ENCODE measurements at regions of chr12 and their contacts with region 1.

Region 1: DNA sequence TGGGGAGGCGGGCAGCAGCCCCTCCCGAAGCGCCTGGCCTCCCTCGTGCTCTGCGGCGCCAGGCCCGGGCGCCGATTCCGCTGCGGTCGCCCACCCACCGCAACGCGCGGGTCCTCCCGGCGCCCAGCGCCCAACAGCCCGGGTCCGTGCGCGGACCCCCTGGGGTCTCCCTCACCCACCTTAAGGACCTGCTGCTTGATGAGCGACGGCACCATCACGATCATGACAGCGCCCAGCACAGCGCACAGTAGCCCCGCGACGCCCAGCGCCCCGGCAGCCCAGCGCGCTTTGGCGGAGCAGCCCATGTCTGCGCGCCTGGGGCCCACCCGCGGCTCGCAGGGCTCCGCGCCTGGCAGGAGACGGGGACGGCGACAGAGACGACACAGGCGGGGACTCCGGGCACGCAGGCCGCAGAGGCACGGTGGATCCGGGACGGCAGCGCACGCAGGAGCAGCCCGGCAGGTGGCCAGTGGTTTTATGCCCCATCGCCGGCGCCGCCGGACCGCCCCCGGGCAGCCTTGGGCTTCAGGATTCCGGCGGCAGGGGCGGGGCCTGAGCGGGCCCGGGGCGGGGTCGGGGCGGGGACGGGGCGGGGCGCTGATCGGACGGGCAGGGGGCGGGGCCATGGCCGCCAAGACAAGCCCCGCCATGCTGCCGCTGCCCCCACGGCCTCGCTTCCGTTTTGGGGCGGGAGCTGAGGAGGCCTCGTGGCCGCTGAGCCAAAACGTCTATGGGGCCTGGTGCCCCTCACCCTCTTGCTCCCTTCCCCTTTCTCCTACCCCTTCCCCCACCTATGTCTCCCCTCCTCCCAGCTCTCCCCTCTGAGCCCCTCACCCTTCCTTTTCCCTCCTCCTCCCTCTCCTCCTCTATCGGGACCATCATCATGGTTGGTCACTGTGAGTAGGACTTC is at the start of gene SCARB1:
- DNase-seq: peak; percentile 83
- H3K4me3 Mint-ChIP-seq: peak within 1 kb of the TSS; percentile 76
- H3K27ac Mint-ChIP-seq: peak within 1 kb of the TSS; percentile 86
- H3K4me1 Mint-ChIP-seq: peaks cover 32% of the 10 kb centered on the region
- H3K27me3 Mint-ChIP-seq: no peaks in the 10 kb centered on the region
- CTCF ChIP-seq: no peak
- total RNA-seq, gene SCARB1: 48.2 and 71.0 TPM in 2 replicates

Region 2: DNA sequence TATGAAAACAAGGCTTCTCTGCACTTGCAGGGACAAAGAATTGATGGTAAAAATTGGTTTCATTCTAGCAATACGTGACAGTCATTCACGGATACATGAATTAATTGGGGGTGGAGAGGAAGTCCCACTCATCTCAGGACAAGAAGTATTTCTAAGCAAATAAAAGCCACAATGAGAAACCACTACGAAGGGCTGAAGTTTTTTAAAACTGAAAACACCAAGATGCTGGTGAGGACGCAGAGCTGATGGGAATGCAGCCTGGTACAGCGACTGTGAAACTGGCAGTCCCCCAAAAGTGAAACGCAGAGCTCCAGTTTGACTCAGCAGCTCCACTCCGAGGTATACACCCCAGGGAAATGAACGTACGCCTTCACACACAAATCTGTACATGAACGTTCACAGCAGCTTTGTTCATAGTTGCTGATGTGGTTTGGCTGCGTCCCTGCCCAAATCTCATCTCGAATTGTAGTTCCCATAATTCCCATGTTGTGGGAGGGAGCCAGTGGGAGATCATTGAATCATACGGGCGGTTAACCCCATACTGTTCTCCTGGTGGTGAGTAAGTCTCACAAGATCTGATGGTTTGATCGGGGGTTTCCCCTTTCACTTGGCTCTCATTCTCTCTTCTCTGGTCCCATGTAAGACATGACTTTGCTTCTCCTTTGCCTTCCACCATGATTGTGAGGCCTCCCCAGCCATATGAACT is 89.1 kb before region 1 on chr12:
- CTCF ChIA-PET with region 1: no interaction called
- POLR2A ChIA-PET with region 1: no interaction called
- intact Hi-C with region 1: loop called (anchors 2 kb)
- DNase-seq: peak; percentile 92
- H3K4me3 Mint-ChIP-seq: peak overlapping the region; percentile 32
- H3K27ac Mint-ChIP-seq: peak overlapping the region; percentile 40
- H3K4me1 Mint-ChIP-seq: peaks cover 39% of the 10 kb centered on the region
- H3K27me3 Mint-ChIP-seq: no peaks in the 10 kb centered on the region
- CTCF ChIP-seq: peak; percentile 12

Region 3: DNA sequence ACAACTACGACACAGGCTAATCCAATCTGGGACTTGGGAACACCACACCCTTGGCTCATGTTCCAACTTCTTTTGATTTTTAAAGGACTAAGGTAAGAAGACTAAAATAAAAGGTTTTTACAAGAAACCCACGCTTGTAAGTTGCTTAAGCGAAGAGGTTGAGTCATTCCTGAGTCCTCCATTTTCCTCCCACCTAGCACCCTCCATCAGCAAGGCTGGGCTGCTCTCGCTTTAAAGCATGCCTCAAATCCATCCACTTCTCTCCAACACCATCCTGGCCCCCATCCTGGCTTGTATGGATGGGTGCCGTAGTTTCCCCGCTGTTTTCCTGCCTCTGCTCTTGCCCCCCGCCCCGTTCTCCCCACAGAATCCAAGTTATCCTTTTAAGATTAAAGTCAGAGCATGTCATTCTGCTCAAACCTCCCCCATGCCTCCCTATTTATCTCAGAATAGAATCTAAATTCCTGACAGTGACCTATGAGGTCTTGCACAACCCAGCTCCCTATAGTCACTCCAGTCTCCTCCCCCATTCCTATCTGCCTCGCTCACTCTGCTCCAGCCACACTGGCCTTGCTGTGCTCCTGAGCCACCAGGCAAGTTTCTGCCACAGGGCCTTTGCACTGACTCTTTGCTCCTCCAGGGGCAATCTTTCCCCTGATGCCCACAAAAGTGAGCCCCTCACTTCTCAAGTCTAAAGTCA is 34.5 kb before region 1 on chr12:
- CTCF ChIA-PET with region 1: interaction called, 3 read pairs
- POLR2A ChIA-PET with region 1: interaction called, 22 read pairs
- intact Hi-C with region 1: loop called (anchors 1 kb)
- DNase-seq: peak; percentile 91
- H3K4me3 Mint-ChIP-seq: peak overlapping the region; percentile 58
- H3K27ac Mint-ChIP-seq: peak overlapping the region; percentile 96
- H3K4me1 Mint-ChIP-seq: peaks cover 43% of the 10 kb centered on the region
- H3K27me3 Mint-ChIP-seq: no peaks in the 10 kb centered on the region
- CTCF ChIP-seq: no peak

Region 4: DNA sequence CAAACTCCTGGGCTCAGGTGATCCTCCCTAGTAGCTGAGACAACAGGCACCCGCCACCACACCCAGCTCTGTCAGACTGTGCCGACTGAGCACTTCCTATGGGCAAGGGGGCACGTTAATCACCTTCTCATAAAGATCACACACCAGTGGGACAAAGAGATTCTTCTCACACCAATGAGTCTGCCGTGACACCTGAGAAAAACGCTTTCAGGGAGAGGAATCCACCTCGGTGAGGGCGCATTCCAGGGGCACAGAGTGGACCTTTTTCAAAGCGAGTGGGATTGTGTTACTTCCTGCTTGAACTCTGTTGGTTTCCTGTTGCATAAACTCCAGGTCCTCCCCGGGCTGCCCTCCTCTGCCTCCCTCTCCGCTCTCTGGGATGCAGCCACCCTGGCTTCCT is 17.5 kb after region 1 on chr12:
- CTCF ChIA-PET with region 1: no interaction called
- POLR2A ChIA-PET with region 1: no interaction called
- intact Hi-C with region 1: no loop called
- DNase-seq: no peak
- H3K4me3 Mint-ChIP-seq: no peak overlapping the region
- H3K27ac Mint-ChIP-seq: no peak overlapping the region
- H3K4me1 Mint-ChIP-seq: peaks cover 7% of the 10 kb centered on the region
- H3K27me3 Mint-ChIP-seq: no peaks in the 10 kb centered on the region
- CTCF ChIP-seq: no peak

Region 5: GRCh38 chr12:124898200-124898922 is 34.7 kb after region 1 on chr12:
- CTCF ChIA-PET with region 1: interaction called, 4 read pairs
- POLR2A ChIA-PET with region 1: no interaction called
- intact Hi-C with region 1: loop called (anchors 2 kb)
- DNase-seq: peak; percentile 79
- H3K4me3 Mint-ChIP-seq: no peak overlapping the region
- H3K27ac Mint-ChIP-seq: no peak overlapping the region
- H3K4me1 Mint-ChIP-seq: peaks cover 6% of the 10 kb centered on the region
- H3K27me3 Mint-ChIP-seq: no peaks in the 10 kb centered on the region
- CTCF ChIP-seq: peak; percentile 54